ENCODE measurements at regions of chr6 and their contacts with region 1.

Region 1: GRCh38 chr6:77979204-77979603 is 326.4 kb downstream of the MEI4 start:
- DNase-seq: no peak
- ATAC-seq: no peak
- H3K4me3 ChIP-seq: no peak overlapping the region
- H3K27ac ChIP-seq: no peak overlapping the region
- H3K4me1 ChIP-seq: no peaks in the 10 kb centered on the region
- H3K27me3 ChIP-seq: no peaks in the 10 kb centered on the region
- CTCF ChIP-seq: no peak
- EP300 ChIP-seq: no peak
- POLR2A ChIP-seq: no peak
- RAD21 ChIP-seq: no peak

Region 2: GRCh38 chr6:78031228-78031627 is 52.0 kb after region 1 on chr6:
- CTCF ChIA-PET with region 1: no interaction called
- POLR2A ChIA-PET with region 1: no interaction called
- RAD21 ChIA-PET with region 1: no interaction called
- SMC1A ChIA-PET with region 1: no interaction called
- in situ Hi-C with region 1: no loop called
- intact Hi-C with region 1: loop called (anchors 5 kb)
- DNase-seq: no peak
- ATAC-seq: no peak
- H3K4me3 ChIP-seq: no peak overlapping the region
- H3K27ac ChIP-seq: no peak overlapping the region
- H3K4me1 ChIP-seq: no peaks in the 10 kb centered on the region
- H3K27me3 ChIP-seq: no peaks in the 10 kb centered on the region
- CTCF ChIP-seq: no peak
- EP300 ChIP-seq: no peak
- POLR2A ChIP-seq: no peak
- RAD21 ChIP-seq: no peak